Gastrocnemius medialis (tissue), 4 donors: ENCODE measurements at regions of chr16 and their contacts with region 1.

Region 1: GRCh38 chr16:81706327-81707295 is 72.5 kb upstream of the PLCG2 start:
- DNase-seq: no peak
- ATAC-seq: no peak
- H3K4me3 ChIP-seq: no peak overlapping the region
- H3K27ac ChIP-seq: no peak overlapping the region
- H3K4me1 ChIP-seq: no peaks in the 10 kb centered on the region
- H3K27me3 ChIP-seq: no peaks in the 10 kb centered on the region
- CTCF ChIP-seq: no peak
- POLR2A ChIP-seq: no peak

Region 2: GRCh38 chr16:81261049-81261648 is 445.5 kb before region 1 on chr16:
- in situ Hi-C with region 1: no loop called
- intact Hi-C with region 1: no loop called
- DNase-seq: no peak
- ATAC-seq: no peak
- H3K4me3 ChIP-seq: no peak overlapping the region
- H3K27ac ChIP-seq: no peak overlapping the region
- H3K4me1 ChIP-seq: peaks cover 0 to 3% of the 10 kb centered on the region in 2 donors
- H3K27me3 ChIP-seq: no peaks in the 10 kb centered on the region
- CTCF ChIP-seq: peak in 3 of 5 experiments; percentile 13 to 35 (median 22)
- POLR2A ChIP-seq: no peak

Region 3: GRCh38 chr16:81748476-81749198 is 42.0 kb after region 1 on chr16:
- in situ Hi-C with region 1: no loop called
- intact Hi-C with region 1: loop called (anchors 1 kb)
- DNase-seq: no peak
- ATAC-seq: no peak
- H3K4me3 ChIP-seq: no peak overlapping the region
- H3K27ac ChIP-seq: no peak overlapping the region
- H3K4me1 ChIP-seq: peaks cover 0 to 3% of the 10 kb centered on the region in 2 donors
- H3K27me3 ChIP-seq: no peaks in the 10 kb centered on the region
- CTCF ChIP-seq: no peak
- POLR2A ChIP-seq: no peak